ENCODE measurements at regions of chr20 and their contacts with region 1.

Region 1: GRCh38 chr20:17604852-17605660 is 35.2 kb downstream of the DSTN start:
- DNase-seq: no peak
- H3K4me3 Mint-ChIP-seq: no peak overlapping the region
- H3K27ac Mint-ChIP-seq: no peak overlapping the region
- H3K4me1 Mint-ChIP-seq: no peaks in the 10 kb centered on the region
- H3K27me3 Mint-ChIP-seq: no peaks in the 10 kb centered on the region
- CTCF ChIP-seq: no peak

Region 2: DNA sequence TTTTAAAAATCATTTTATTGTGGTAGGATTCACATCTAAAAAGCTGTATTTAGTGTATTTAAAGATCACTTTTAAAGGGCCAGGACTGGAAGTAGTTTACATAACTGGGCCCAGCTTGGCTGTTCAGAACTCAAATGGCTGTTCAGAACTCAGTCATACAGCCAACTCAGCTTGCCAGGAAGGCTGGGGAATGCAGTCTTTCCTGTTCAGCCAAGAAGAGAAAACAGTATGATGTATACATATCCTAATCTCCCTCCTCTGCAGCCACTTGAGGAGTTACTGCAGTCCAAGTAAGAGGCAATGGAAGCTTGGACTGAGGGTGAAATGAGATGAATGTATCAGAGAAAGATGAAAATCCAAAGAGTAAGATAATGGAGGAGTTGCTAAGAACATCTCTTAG is 10.6 kb before region 1 on chr20:
- CTCF ChIA-PET with region 1: interaction called, 11 read pairs
- POLR2A ChIA-PET with region 1: interaction called, 10 read pairs
- intact Hi-C with region 1: no loop called
- DNase-seq: no peak
- H3K4me3 Mint-ChIP-seq: no peak overlapping the region
- H3K27ac Mint-ChIP-seq: no peak overlapping the region
- H3K4me1 Mint-ChIP-seq: peaks cover 49% of the 10 kb centered on the region
- H3K27me3 Mint-ChIP-seq: no peaks in the 10 kb centered on the region
- CTCF ChIP-seq: no peak

Region 3: DNA sequence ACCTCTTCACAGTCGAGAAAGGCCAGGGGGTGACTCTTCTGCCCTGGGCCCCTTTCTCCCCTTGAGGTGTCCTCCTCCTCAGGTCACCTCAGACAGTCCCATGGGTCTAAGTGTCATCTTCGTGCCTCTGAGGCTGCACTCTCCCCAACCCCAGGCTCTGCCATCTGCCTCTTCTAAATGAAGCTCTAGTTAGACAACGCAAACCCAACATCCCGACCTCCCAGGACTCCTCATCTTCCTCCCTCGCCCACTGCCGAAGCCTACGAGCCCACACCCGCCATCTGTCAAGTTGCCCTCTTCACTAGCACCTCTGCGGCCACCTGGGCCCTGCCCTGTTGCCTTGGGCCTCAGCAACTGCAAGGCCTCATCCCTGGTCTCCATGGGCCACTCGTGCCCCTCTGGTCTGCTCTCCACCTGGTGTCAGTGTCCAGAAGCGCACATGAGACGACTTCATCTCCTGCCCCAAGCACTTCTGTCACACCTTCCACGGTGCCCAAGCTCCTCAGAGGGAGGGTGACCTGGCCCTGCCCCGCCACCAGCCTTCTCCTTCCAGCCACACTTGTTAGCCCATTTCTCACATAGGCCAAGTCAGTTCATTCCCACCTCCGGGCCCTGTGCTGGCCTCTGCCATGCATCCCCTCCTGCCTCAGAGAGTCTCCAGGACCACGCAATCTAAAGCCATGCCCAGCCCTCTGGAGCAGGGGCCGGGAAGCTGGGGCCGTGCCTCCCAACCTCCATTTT is 23.2 kb after region 1 on chr20:
- CTCF ChIA-PET with region 1: no interaction called
- POLR2A ChIA-PET with region 1: no interaction called
- intact Hi-C with region 1: no loop called
- DNase-seq: no peak
- H3K4me3 Mint-ChIP-seq: no peak overlapping the region
- H3K27ac Mint-ChIP-seq: peak overlapping the region; percentile 23
- H3K4me1 Mint-ChIP-seq: no peaks in the 10 kb centered on the region
- H3K27me3 Mint-ChIP-seq: no peaks in the 10 kb centered on the region
- CTCF ChIP-seq: no peak